Naive thymus-derived CD4-positive, alpha-beta T cell (primary cell): ENCODE measurements at regions of chr21 and their contacts with region 1.

Region 1: GRCh38 chr21:33479679-33480480 is at the start of gene TMEM50B:
- DNase-seq: peak; percentile 85 to 96 (median 94)
- ATAC-seq: peak; percentile 95
- H3K4me3 ChIP-seq: peak within 1 kb of the TSS; percentile 70
- H3K4me3 Mint-ChIP-seq: peak within 1 kb of the TSS; percentile 87 to 96 (median 96)
- H3K27ac ChIP-seq: peak within 1 kb of the TSS; percentile 89
- H3K27ac Mint-ChIP-seq: peak within 1 kb of the TSS; percentile 90 to 99 (median 95)
- H3K4me1 ChIP-seq: peaks cover 0 to 5% of the 10 kb centered on the region in 2 donors
- H3K4me1 Mint-ChIP-seq: peaks cover 7 to 33% (median 21%) of the 10 kb centered on the region in 7 donors
- H3K27me3 ChIP-seq: no peaks in the 10 kb centered on the region
- H3K27me3 Mint-ChIP-seq: peaks cover 0 to 15% (median 0%) of the 10 kb centered on the region in 5 donors
- total RNA-seq, gene TMEM50B: 38.3 to 108 (median 61.7) TPM

Region 2: DNA sequence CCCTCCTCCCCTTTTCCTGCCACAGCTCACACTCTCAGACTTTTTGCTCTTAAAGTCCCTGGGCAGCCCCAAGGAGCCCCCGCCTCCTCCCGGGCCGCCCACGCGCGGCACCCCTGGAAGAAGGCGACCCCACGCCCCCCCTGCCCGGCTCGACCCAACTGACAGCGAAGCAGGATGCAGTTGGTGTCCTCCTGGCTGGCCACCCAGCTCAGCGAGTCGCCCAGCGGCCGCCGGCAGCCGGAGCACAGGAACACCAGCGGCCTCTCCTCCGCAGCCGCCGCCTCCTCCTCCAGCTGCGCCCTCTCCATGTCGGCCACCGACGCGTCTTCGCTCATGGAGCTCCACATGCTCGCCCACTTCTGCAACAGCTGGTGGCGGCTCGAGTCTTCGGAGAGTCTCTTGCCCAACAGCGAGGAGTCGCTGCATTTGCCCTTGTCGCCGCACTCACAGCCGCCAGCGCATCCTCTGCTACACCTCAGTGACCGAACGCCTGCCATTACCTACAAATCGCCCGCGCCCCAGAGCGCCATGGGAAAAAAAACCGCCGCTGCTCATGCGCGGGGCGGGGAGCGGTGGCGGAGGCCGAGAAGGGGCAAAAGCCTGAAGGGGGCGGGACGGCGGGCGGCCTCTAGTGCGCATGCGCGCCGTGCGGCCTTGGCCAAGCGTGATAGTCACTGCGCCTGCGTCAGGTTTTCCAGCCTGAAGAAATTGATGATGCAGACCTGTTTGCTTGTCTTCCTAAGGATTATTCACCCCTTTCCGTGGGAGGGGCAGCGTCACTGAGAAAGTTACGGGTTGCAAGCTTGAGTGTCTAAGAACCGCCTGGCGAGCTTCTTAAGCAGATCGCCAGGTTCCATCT is 1201.1 kb before region 1 on chr21 and contains the start of gene MIS18A:
- CTCF ChIA-PET with region 1: no interaction called
- POLR2A ChIA-PET with region 1: no interaction called
- intact Hi-C with region 1: loop called in 1 of 2 experiments (anchors 5 kb)
- DNase-seq: peak; percentile 92 to 98 (median 95)
- ATAC-seq: peak; percentile 97
- H3K4me3 ChIP-seq: peak within 1 kb of the TSS; percentile 90
- H3K4me3 Mint-ChIP-seq: peak within 1 kb of the TSS; percentile 95 to 100 (median 98)
- H3K27ac ChIP-seq: peak within 1 kb of the TSS; percentile 70
- H3K27ac Mint-ChIP-seq: peak within 1 kb of the TSS; percentile 90 to 97 (median 94)
- H3K4me1 ChIP-seq: peaks cover 14 to 16% of the 10 kb centered on the region in 2 donors
- H3K4me1 Mint-ChIP-seq: peaks cover 8 to 36% (median 33%) of the 10 kb centered on the region in 7 donors
- H3K27me3 ChIP-seq: no peaks in the 10 kb centered on the region
- H3K27me3 Mint-ChIP-seq: no peaks in the 10 kb centered on the region
- total RNA-seq, gene MIS18A: 3.3 to 16.4 (median 8.4) TPM

Region 3: DNA sequence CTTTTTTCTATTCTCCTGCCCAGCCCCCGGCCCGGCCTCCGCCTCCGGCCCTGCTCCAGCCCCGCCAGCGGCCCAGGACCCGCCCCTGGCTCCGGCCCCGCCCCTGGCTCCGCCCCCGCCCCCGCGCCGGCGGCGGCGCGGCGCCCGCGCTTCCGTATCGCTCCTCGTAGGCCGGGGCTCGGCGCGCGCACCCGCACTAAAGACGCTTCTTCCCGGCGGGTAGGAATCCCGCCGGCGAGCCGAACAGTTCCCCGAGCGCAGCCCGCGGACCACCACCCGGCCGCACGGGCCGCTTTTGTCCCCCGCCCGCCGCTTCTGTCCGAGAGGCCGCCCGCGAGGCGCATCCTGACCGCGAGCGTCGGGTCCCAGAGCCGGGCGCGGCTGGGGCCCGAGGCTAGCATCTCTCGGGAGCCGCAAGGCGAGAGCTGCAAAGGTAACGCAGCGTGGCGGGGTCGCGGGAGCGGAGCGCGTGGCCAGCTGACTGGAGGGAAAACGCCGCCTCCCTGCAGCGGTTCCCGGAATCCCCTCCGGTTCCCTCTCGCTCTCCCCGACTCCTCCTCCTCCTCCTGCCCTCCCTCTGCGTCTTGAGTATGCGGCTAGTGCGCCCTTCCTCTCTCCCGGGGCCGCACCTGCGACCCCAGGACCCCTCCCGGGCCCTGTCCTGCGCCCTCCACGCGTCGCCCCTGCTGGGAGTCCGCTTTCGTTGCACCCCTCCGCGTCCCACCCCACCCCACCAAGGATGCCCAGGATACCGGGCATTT is 249.9 kb before region 1 on chr21 and contains the start of gene IFNAR2:
- CTCF ChIA-PET with region 1: no interaction called
- POLR2A ChIA-PET with region 1: no interaction called
- intact Hi-C with region 1: loop called in 1 of 2 experiments (anchors 10 kb)
- DNase-seq: peak; percentile 55 to 82 (median 68)
- ATAC-seq: peak; percentile 93
- H3K4me3 ChIP-seq: peak within 1 kb of the TSS; percentile 83
- H3K4me3 Mint-ChIP-seq: peak within 1 kb of the TSS; percentile 88 to 97 (median 92)
- H3K27ac ChIP-seq: peak within 1 kb of the TSS; percentile 92
- H3K27ac Mint-ChIP-seq: peak within 1 kb of the TSS; percentile 83 to 98 (median 90)
- H3K4me1 ChIP-seq: peaks cover 22 to 40% of the 10 kb centered on the region in 2 donors
- H3K4me1 Mint-ChIP-seq: peaks cover 35 to 59% (median 51%) of the 10 kb centered on the region in 7 donors
- H3K27me3 ChIP-seq: no peaks in the 10 kb centered on the region
- H3K27me3 Mint-ChIP-seq: no peaks in the 10 kb centered on the region
- total RNA-seq, gene IFNAR2: 44.9 to 85.8 (median 60.8) TPM

Region 4: DNA sequence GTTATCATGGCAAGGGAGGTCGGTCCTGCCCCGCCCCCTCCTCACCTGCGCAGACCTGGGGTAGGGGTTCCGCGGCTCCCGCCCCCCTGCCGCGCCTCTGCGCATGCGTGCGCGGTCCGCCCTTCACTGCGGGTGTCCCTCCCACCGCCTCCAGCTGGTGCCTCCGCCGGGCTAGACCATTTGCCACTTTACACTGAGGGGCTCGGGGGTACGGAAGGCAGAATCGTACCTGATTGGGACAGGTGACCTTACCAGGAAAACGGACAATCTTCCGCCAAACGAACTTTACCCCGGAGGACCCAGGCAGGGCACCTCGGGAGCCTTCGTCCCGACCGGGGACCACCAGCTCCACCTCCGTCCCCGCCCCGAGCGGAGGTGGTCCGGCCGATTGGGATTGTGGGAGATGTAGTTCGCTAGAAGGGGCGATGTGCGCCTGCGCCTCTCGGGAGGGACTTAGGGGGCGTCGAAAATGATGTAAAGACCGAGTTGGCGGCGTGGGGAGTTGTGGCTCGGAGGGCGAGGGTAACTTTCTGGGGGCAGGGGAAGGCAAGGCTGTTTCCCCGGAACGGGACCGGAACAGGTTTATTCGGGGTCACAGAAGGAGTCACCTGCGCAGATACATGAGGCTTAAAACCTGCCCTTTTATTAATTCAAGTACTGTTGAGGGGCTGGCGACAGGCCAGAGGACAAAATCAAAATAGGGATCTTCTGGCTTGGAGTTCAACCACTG is 11.7 kb after region 1 on chr21 and contains the start of gene DNAJC28:
- CTCF ChIA-PET with region 1: interaction called, 17 read pairs
- POLR2A ChIA-PET with region 1: interaction called, 98 read pairs
- intact Hi-C with region 1: loop called (anchors 1 kb)
- DNase-seq: peak; percentile 91 to 96 (median 95)
- ATAC-seq: peak; percentile 99
- H3K4me3 ChIP-seq: peak within 1 kb of the TSS; percentile 93
- H3K4me3 Mint-ChIP-seq: peak within 1 kb of the TSS; percentile 86 to 97 (median 92)
- H3K27ac ChIP-seq: peak within 1 kb of the TSS; percentile 74
- H3K27ac Mint-ChIP-seq: peak within 1 kb of the TSS; percentile 73 to 97 (median 92)
- H3K4me1 ChIP-seq: peaks cover 0 to 5% of the 10 kb centered on the region in 2 donors
- H3K4me1 Mint-ChIP-seq: peaks cover 5 to 14% (median 12%) of the 10 kb centered on the region in 7 donors
- H3K27me3 ChIP-seq: no peaks in the 10 kb centered on the region
- H3K27me3 Mint-ChIP-seq: peaks cover 0 to 15% (median 0%) of the 10 kb centered on the region in 5 donors
- total RNA-seq, gene DNAJC28: 0.27 to 1.5 (median 0.61) TPM in 4 of 5 experiments, not detected in the other

Region 5: DNA sequence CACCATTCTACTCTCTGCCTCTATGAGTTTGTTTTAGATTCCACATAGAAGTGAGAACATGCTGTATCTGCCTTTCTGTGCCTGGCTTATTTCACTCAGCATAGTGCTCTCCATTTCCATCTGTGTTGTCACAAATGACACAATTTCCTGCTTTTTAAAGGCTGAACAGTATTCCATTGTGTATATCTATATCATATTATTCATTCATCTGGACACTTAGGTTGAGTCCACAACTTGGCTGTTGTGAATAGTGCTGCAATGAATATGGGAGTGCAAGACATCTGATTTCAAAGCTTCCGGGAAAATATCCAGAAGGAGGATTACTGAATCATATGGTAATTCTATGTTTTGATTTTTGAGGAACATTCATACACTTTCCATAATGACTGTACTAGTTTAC is 128.7 kb after region 1 on chr21:
- CTCF ChIA-PET with region 1: interaction called, 5 read pairs
- POLR2A ChIA-PET with region 1: interaction called, 3 read pairs
- intact Hi-C with region 1: loop called in 1 of 2 experiments (anchors 1 kb)
- DNase-seq: no peak
- ATAC-seq: no peak
- H3K4me3 ChIP-seq: no peak overlapping the region
- H3K4me3 Mint-ChIP-seq: no peak overlapping the region
- H3K27ac ChIP-seq: no peak overlapping the region
- H3K27ac Mint-ChIP-seq: peak overlapping the region in 1 of 9 donors; percentile 7
- H3K4me1 ChIP-seq: no peaks in the 10 kb centered on the region
- H3K4me1 Mint-ChIP-seq: peaks cover 0 to 5% (median 4%) of the 10 kb centered on the region in 7 donors
- H3K27me3 ChIP-seq: no peaks in the 10 kb centered on the region
- H3K27me3 Mint-ChIP-seq: no peaks in the 10 kb centered on the region